ENCODE measurements at regions of chr17 and their contacts with region 1.

Region 1: DNA sequence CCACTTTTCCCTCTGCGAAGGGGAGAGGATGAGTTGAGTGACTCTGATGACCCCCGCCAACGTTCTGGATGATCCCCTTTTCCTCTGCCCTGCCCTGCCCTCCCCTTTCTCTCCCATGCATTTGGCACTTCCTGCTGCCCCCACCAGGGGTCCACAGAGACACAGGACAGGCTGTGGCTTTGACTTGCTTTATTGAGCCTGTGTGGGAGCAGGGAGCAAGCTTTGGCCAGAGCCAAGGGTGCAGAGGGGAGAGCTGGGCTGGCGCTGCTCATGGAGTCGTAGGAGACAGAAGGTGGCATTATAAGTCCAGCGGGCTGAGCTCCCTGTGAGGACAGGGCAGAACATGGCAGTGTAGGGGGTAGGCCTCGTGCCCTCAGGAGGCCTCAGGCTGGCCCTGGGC is 1.6 kb downstream of the PPY start:
- DNase-seq: peak; percentile 49
- ATAC-seq: peak; percentile 42
- H3K4me3 Mint-ChIP-seq: no peak overlapping the region
- H3K27ac Mint-ChIP-seq: no peak overlapping the region
- H3K4me1 Mint-ChIP-seq: peaks cover 14% of the 10 kb centered on the region
- H3K27me3 Mint-ChIP-seq: peaks cover 5% of the 10 kb centered on the region
- CTCF ChIP-seq: peak; percentile 43

Region 2: GRCh38 chr17:43983515-43984411 is 43.1 kb after region 1 on chr17:
- CTCF ChIA-PET with region 1: interaction called, 14 read pairs
- POLR2A ChIA-PET with region 1: no interaction called
- intact Hi-C with region 1: no loop called
- DNase-seq: peak; percentile 28
- ATAC-seq: peak; percentile 34
- H3K4me3 Mint-ChIP-seq: peak overlapping the region; percentile 41
- H3K27ac Mint-ChIP-seq: no peak overlapping the region
- H3K4me1 Mint-ChIP-seq: no peaks in the 10 kb centered on the region
- H3K27me3 Mint-ChIP-seq: peaks cover 33% of the 10 kb centered on the region
- CTCF ChIP-seq: no peak

Region 3: GRCh38 chr17:43994272-43995149 is 53.9 kb after region 1 on chr17:
- CTCF ChIA-PET with region 1: interaction called, 62 read pairs
- POLR2A ChIA-PET with region 1: no interaction called
- intact Hi-C with region 1: loop called (anchors 2 kb)
- DNase-seq: peak; percentile 75
- ATAC-seq: peak; percentile 95
- H3K4me3 Mint-ChIP-seq: no peak overlapping the region
- H3K27ac Mint-ChIP-seq: no peak overlapping the region
- H3K4me1 Mint-ChIP-seq: no peaks in the 10 kb centered on the region
- H3K27me3 Mint-ChIP-seq: peaks cover 14% of the 10 kb centered on the region
- CTCF ChIP-seq: peak; percentile 95

Region 4: DNA sequence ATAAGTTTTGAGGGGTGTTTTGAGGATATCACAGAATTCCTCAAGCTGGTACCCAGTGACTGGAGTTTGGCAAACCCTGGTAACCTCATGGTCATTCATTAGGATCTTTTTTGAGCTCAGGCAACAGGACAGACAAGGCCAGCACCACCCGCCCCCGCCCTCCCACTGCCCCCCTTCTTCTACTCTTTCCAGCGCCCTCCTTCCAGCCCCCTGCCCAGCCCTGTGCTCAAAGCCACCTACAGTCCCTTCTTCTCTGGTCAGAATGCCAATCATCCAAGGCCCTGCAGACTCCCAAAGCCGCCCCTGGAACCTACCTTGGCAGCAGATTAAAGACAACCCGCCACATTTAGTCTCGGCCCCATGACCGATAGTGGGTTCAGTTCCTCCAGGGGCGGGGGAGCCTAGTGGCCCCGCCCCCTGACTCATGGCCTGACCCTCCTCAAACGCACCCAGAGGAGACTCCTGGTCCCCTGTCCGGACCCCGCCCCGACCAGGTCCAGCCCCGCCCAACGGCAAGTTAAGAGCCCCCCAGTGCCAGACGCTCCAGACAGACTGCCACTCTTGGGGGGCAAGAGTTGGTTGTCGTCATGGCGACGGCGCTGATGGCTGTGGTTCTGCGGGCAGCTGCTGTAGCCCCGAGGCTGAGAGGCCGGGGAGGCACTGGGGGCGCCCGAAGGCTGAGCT is 63.6 kb after region 1 on chr17 and contains the start of gene NAGS:
- CTCF ChIA-PET with region 1: interaction called, 62 read pairs
- POLR2A ChIA-PET with region 1: no interaction called
- intact Hi-C with region 1: no loop called
- DNase-seq: peak; percentile 30
- ATAC-seq: no peak
- H3K4me3 Mint-ChIP-seq: peak within 1 kb of the TSS; percentile 29
- H3K27ac Mint-ChIP-seq: no peak within 1 kb of the TSS
- H3K4me1 Mint-ChIP-seq: peaks cover 24% of the 10 kb centered on the region
- H3K27me3 Mint-ChIP-seq: peaks cover 17% of the 10 kb centered on the region
- CTCF ChIP-seq: no peak
- total RNA-seq, gene NAGS: 1.7 to 2.4 TPM

Region 5: GRCh38 chr17:44044067-44044466 is 103.4 kb after region 1 on chr17:
- CTCF ChIA-PET with region 1: interaction called, 16 read pairs
- POLR2A ChIA-PET with region 1: no interaction called
- intact Hi-C with region 1: no loop called
- DNase-seq: no peak
- ATAC-seq: no peak
- H3K4me3 Mint-ChIP-seq: no peak overlapping the region
- H3K27ac Mint-ChIP-seq: peak overlapping the region; percentile 16
- H3K4me1 Mint-ChIP-seq: peaks cover 17% of the 10 kb centered on the region
- H3K27me3 Mint-ChIP-seq: no peaks in the 10 kb centered on the region
- CTCF ChIP-seq: no peak

Region 6: GRCh38 chr17:44115585-44116415 is 175.2 kb after region 1 on chr17:
- CTCF ChIA-PET with region 1: interaction called, 11 read pairs
- POLR2A ChIA-PET with region 1: no interaction called
- intact Hi-C with region 1: no loop called
- DNase-seq: peak; percentile 42
- ATAC-seq: no peak
- H3K4me3 Mint-ChIP-seq: no peak overlapping the region
- H3K27ac Mint-ChIP-seq: no peak overlapping the region
- H3K4me1 Mint-ChIP-seq: peaks cover 14% of the 10 kb centered on the region
- H3K27me3 Mint-ChIP-seq: no peaks in the 10 kb centered on the region
- CTCF ChIP-seq: peak; percentile 77

Region 7: DNA sequence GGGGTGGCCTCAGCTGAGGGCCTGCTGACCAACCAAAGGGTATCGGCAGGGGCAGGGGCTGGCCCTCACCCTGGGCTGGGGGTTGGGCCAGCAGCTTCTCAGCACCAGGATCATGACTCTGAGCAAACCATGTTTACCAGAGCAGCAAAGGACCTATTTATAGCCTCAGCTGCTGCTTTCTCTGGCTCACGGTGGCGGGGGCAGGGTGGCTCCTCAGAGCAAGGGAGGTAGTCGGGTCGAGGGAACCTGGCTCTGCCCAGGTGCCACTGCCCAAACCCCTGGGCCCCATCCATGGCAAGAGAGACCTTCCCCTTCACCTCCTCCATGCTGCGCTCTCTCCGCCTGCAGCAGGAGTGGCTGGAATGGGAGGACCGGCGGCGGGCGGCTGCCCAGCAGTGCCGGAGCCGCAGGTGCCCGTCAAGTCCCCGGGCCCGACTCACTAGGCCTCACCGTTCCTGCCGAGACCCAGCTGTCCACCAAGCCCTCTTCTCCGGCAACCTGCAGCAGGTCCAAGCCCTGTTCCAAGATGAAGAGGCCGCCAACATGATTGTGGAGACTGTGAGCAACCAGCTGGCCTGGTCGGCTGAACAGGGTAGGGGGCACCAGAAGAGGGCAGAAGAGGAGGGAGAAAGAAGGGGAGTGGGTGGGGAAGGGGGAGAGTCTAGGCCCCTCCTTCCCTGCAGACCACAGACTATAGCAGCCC is 230.0 kb after region 1 on chr17 and contains the start of gene ASB16:
- CTCF ChIA-PET with region 1: interaction called, 15 read pairs
- POLR2A ChIA-PET with region 1: interaction called, 3 read pairs
- intact Hi-C with region 1: no loop called
- DNase-seq: no peak
- ATAC-seq: no peak
- H3K4me3 Mint-ChIP-seq: no peak within 1 kb of the TSS
- H3K27ac Mint-ChIP-seq: no peak within 1 kb of the TSS
- H3K4me1 Mint-ChIP-seq: no peaks in the 10 kb centered on the region
- H3K27me3 Mint-ChIP-seq: no peaks in the 10 kb centered on the region
- CTCF ChIP-seq: no peak
- total RNA-seq, gene ASB16: 0.18 to 0.27 TPM